ENCODE measurements at regions of chr1 and their contacts with region 1.

Region 1: DNA sequence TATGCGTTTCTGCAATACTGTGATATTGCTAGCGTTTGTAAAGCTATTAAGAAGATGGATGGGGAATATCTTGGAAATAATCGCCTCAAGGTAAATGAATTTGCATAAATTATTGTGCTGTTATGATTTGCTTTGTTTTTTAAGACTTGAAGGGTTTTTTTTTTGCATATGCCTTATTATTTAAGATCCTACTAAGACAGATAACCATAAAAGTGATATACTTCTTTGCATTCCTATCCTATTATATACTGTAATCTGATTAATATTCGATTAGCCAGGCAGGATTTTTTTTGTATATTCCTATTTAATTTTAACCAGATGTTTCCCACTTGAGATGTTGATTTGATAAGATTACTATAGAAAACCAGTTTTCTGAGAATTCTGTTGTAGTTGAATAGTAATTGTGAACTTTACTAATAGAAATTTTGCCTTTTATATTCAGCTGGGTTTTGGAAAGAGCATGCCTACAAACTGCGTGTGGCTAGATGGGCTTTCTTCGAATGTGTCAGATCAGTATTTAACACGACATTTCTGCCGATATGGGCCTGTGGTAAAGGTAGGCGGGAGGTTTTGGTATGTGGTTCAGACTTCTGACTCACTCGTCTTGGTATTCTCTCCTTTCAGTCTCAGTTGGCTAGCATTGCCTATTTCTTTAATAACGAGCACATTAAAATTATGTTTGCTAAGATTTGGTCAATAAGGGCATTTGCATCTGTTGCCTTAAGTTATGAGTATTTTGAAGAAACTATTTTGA is 56.8 kb downstream of the ZBTB17 start:
- DNase-seq: peak; percentile 60
- H3K4me3 Mint-ChIP-seq: peak overlapping the region; percentile 44
- H3K27ac Mint-ChIP-seq: peak overlapping the region; percentile 42
- H3K4me1 Mint-ChIP-seq: peaks cover 42% of the 10 kb centered on the region
- H3K27me3 Mint-ChIP-seq: no peaks in the 10 kb centered on the region

Region 2: DNA sequence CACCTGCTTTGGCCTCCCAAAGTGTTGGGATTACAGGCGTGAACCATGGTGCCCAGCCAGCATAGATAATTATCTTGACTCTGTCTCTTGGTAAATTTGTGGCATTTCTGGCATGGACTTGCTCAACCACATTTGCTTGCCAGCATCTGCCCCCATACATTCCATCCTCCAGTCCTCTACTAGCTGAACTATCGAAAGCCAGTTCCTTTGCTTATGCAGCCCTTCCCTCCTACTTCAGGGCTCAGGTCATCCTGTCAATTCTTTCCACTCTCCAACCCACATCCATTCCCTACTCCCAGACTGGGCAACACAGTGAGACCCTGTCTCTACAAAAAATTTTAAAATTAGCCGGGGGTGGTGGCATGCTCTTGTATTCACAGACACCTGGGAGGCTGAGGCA is 98.7 kb before region 1 on chr1:
- intact Hi-C with region 1: loop called (anchors 1 kb)
- DNase-seq: no peak
- H3K4me3 Mint-ChIP-seq: no peak overlapping the region
- H3K27ac Mint-ChIP-seq: no peak overlapping the region
- H3K4me1 Mint-ChIP-seq: peaks cover 10% of the 10 kb centered on the region
- H3K27me3 Mint-ChIP-seq: no peaks in the 10 kb centered on the region

Region 3: GRCh38 chr1:15882665-15883064 is 36.5 kb before region 1 on chr1:
- intact Hi-C with region 1: loop called (anchors 5 kb)
- DNase-seq: no peak
- H3K4me3 Mint-ChIP-seq: no peak overlapping the region
- H3K27ac Mint-ChIP-seq: no peak overlapping the region
- H3K4me1 Mint-ChIP-seq: peaks cover 51% of the 10 kb centered on the region
- H3K27me3 Mint-ChIP-seq: no peaks in the 10 kb centered on the region

Region 4: GRCh38 chr1:15949453-15950245 is 30.5 kb after region 1 on chr1:
- intact Hi-C with region 1: loop called (anchors 1 kb)
- DNase-seq: peak; percentile 53
- H3K4me3 Mint-ChIP-seq: peak overlapping the region; percentile 73
- H3K27ac Mint-ChIP-seq: peak overlapping the region; percentile 98
- H3K4me1 Mint-ChIP-seq: peaks cover 77% of the 10 kb centered on the region
- H3K27me3 Mint-ChIP-seq: no peaks in the 10 kb centered on the region

Region 5: DNA sequence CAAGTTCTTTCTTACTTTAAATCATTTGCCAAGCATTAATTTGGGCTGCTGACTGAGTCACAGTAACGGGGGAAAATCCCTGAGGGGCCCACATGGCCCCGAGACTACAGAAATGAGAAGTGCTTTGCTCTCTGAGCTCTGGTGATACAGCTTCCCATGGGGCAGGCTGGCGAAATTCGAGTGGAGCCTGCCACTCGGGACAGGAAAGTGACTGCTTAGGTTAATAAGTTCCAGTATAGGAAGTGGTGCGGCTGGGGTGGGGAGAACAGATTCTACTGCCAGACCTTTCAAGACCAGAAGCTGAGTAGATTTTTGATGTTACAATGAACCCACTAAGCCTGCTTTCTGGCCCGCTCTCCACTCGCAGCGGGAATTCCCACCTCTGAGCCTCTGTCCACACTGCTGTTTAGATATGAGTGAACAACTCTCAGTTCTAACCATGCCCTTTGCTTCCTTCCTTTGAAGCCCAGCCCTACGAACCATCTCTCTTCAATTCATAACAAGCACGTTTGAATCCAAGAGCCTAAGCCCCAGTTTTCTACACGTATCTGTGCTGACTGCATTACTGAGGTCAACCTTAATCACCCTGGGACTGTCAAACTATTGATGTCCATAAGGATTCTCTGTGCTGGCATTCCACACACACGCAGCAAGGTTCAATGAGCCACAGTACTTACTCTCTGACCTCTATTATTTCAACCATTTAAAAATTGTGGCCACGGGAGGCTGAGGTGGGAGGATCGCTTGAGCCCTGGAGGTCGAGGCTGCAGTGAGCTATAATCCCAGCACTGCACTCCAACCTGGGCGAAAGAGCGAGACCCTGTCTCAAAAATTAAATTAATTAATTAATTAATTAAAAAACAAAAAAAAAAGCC is 47.2 kb after region 1 on chr1:
- intact Hi-C with region 1: loop called (anchors 1 kb)
- DNase-seq: peak; percentile 72
- H3K4me3 Mint-ChIP-seq: peak overlapping the region; percentile 79
- H3K27ac Mint-ChIP-seq: peak overlapping the region; percentile 95
- H3K4me1 Mint-ChIP-seq: peaks cover 77% of the 10 kb centered on the region
- H3K27me3 Mint-ChIP-seq: no peaks in the 10 kb centered on the region

Region 6: DNA sequence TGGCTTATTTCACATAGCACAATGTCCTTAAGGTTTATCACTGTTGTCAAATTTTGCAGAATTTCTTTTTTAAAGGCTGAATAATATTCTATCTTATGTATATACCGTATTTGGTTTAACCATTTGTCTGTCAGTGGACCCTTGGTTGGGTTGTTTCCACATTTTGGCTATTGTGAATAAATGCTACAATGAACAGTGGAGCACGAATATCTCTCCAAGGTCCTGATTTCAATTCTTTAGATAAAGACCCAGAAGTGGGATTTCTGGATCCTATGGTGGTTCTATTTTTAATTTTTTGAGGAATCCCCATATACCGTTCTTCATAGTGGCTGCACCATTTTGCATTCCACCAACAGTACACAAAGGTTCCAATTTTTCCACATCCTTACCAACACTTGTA is 62.5 kb after region 1 on chr1:
- intact Hi-C with region 1: no loop called
- DNase-seq: no peak
- H3K4me3 Mint-ChIP-seq: no peak overlapping the region
- H3K27ac Mint-ChIP-seq: no peak overlapping the region
- H3K4me1 Mint-ChIP-seq: peaks cover 30% of the 10 kb centered on the region
- H3K27me3 Mint-ChIP-seq: peaks cover 2% of the 10 kb centered on the region

Region 7: DNA sequence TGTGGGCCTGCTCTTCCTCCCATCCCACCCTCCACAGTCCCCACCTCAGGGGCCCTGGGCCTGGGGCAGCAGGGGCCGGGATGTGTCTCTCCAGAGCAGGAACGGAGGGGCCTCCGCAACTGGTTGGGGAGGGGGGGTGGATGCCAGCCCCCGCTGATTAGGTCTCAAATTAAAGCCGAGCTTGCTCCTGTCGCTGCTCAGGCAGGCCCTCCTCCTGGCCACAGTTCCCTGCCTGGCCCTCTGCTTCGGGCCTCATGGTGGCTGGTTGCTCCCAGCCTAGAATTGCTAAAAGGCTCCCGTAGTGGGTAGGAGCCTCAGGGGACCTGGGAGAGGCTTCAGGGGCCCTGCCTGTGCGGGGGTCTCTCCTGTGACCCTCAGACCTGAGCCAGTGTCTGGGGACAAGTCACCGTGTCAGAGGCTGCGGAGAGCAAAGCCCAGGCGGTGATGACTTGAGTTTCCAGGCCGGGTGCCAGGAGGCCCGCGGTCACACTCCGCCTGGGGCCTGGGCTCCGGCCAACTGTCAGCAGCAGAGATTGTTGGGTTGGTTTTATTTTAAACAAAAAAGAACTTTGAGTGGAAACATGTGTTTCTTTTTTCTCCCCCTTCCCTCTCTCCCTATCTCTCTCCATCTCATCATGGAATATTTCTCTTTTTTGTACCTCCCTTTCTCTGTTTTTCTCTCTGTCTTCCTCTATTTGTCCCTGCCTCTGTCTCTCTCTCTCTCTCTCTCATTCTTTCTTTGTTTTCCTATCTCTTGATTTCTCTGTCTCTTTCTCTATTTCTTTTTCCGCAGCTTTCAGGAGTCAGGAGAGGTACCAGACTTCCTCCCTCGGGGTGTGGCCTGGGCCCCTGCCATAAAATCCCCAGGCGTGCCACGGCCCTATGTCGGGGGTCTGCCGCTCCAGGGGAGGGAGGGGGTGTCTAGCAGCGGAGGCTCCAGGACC is 256.7 kb after region 1 on chr1:
- intact Hi-C with region 1: no loop called
- DNase-seq: no peak
- H3K4me3 Mint-ChIP-seq: no peak overlapping the region
- H3K27ac Mint-ChIP-seq: no peak overlapping the region
- H3K4me1 Mint-ChIP-seq: no peaks in the 10 kb centered on the region
- H3K27me3 Mint-ChIP-seq: peaks cover 15% of the 10 kb centered on the region

Region 8: DNA sequence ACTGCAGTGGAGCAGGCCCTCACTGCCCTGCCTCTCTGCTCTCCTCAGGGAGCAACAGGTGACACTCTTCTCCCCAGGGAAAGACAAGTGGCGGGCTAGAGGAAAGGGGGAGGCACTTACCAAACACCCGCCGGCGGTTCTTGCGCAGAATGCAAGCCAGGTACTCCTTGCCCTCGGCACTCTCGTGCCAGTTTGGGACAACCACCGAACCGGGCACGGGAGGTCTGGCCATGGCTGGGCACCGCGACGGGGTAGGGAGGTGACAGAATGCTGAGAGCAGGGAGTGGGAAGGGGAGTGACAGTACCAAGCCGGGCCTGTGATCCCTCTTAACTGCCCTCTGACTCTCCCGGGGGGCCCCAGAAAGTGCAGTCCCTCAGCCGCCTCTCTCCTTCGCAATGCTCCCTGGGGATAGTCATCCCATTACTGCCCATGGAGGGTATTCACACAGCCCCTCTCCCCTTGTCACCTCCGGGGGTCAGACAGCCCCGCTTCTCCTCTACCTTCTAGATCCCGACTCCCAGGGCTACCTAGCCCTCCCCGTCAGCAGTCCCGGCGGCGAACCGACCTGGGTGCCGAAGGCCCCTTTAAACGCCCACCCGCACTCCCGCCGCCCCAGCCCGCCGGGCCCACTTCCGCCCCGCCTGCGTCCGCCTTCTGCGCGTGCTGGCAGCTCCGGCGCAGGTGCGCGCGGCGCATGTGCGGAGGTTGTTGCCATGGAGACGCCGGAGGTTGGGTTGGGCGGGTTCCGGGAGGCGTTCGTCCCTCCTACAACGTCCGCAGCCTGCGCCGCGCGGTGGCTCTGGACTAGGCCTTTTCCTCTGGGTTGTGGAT is 317.6 kb after region 1 on chr1 and contains the start of gene CPLANE2:
- intact Hi-C with region 1: no loop called
- DNase-seq: peak; percentile 96
- H3K4me3 Mint-ChIP-seq: peak within 1 kb of the TSS; percentile 83
- H3K27ac Mint-ChIP-seq: peak within 1 kb of the TSS; percentile 87
- H3K4me1 Mint-ChIP-seq: peaks cover 26% of the 10 kb centered on the region
- H3K27me3 Mint-ChIP-seq: no peaks in the 10 kb centered on the region
- total RNA-seq, gene CPLANE2: 3.8 and 4.1 TPM in 2 replicates

Region 9: GRCh38 chr1:16402742-16403141 is 483.6 kb after region 1 on chr1:
- intact Hi-C with region 1: no loop called
- DNase-seq: no peak
- H3K4me3 Mint-ChIP-seq: no peak overlapping the region
- H3K27ac Mint-ChIP-seq: no peak overlapping the region
- H3K4me1 Mint-ChIP-seq: no peaks in the 10 kb centered on the region
- H3K27me3 Mint-ChIP-seq: no peaks in the 10 kb centered on the region